Activated B cell treated with CpG ODN at 0.5 μM for 24 hours (primary cell): ENCODE measurements at regions of chr1 and their contacts with region 1.

Region 1: DNA sequence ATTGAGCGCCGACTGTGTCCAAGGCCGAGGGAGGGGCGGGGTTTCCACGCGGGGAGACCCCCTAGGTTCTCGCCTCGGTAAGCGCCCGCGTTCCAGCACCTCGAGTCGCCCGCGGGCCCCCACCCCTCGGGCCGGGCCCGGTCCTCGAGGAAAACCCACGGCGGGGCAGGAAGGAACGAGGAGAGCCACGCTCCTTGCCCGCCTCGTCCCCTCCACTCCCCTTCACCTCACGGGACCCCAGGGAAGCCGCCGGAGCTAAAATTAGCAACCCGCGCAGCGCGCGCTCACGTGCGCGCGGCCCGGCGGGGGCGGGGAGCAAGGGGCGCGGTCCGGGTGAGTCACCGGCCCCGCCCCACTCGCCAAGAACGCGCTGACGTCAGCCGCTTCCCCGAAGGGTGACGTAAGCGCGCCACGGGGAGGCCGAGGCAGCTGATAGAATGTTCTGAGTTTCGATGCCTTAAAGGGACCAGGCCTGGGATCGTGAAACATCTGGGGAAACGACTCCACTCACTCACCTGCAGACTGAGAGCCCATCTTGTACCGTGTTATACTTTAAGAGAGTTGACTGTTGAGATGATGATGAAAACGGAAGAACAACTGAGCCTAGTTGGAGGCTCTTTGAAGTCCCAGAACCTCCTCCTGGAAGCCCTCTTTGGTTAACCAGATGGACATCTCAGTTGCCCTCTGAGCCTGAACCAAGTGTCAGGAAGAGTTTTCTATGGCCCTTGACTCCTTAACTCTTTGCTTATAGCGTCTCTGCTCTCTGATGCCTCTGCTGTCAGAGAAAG is 49.7 kb upstream of the ATF3 start:
- DNase-seq: peak; percentile 93
- ATAC-seq: peak; percentile 88
- H3K4me3 Mint-ChIP-seq: peak overlapping the region; percentile 88
- H3K27ac Mint-ChIP-seq: peak overlapping the region; percentile 93
- H3K4me1 Mint-ChIP-seq: peaks cover 13% of the 10 kb centered on the region
- H3K27me3 Mint-ChIP-seq: peaks cover 2% of the 10 kb centered on the region
- CTCF ChIP-seq: no peak

Region 2: GRCh38 chr1:211939876-211940468 is 618.9 kb before region 1 on chr1:
- CTCF ChIA-PET with region 1: no interaction called
- POLR2A ChIA-PET with region 1: no interaction called
- intact Hi-C with region 1: loop called (anchors 5 kb)
- DNase-seq: no peak
- ATAC-seq: peak; percentile 55
- H3K4me3 Mint-ChIP-seq: peak overlapping the region; percentile 11
- H3K27ac Mint-ChIP-seq: peak overlapping the region; percentile 56
- H3K4me1 Mint-ChIP-seq: peaks cover 43% of the 10 kb centered on the region
- H3K27me3 Mint-ChIP-seq: no peaks in the 10 kb centered on the region
- CTCF ChIP-seq: no peak

Region 3: GRCh38 chr1:212432706-212433576 is 125.9 kb before region 1 on chr1 and contains the start of gene NENF:
- CTCF ChIA-PET with region 1: no interaction called
- POLR2A ChIA-PET with region 1: no interaction called
- intact Hi-C with region 1: loop called (anchors 2 kb)
- DNase-seq: peak; percentile 80
- ATAC-seq: peak; percentile 99
- H3K4me3 Mint-ChIP-seq: peak within 1 kb of the TSS; percentile 78
- H3K27ac Mint-ChIP-seq: peak within 1 kb of the TSS; percentile 22
- H3K4me1 Mint-ChIP-seq: peaks cover 16% of the 10 kb centered on the region
- H3K27me3 Mint-ChIP-seq: no peaks in the 10 kb centered on the region
- CTCF ChIP-seq: no peak
- total RNA-seq, gene NENF: 24.1 and 26.4 TPM in 2 replicates

Region 4: GRCh38 chr1:212578041-212578440 is 19.2 kb after region 1 on chr1:
- CTCF ChIA-PET with region 1: no interaction called
- POLR2A ChIA-PET with region 1: no interaction called
- intact Hi-C with region 1: no loop called
- DNase-seq: no peak
- ATAC-seq: no peak
- H3K4me3 Mint-ChIP-seq: no peak overlapping the region
- H3K27ac Mint-ChIP-seq: no peak overlapping the region
- H3K4me1 Mint-ChIP-seq: no peaks in the 10 kb centered on the region
- H3K27me3 Mint-ChIP-seq: peaks cover 17% of the 10 kb centered on the region
- CTCF ChIP-seq: no peak

Region 5: GRCh38 chr1:212595787-212596714 is 37.2 kb after region 1 on chr1:
- CTCF ChIA-PET with region 1: no interaction called
- POLR2A ChIA-PET with region 1: interaction called, 3 read pairs
- intact Hi-C with region 1: loop called (anchors 2 kb)
- DNase-seq: no peak
- ATAC-seq: peak; percentile 90
- H3K4me3 Mint-ChIP-seq: peak overlapping the region; percentile 72
- H3K27ac Mint-ChIP-seq: peak overlapping the region; percentile 84
- H3K4me1 Mint-ChIP-seq: peaks cover 16% of the 10 kb centered on the region
- H3K27me3 Mint-ChIP-seq: peaks cover 20% of the 10 kb centered on the region
- CTCF ChIP-seq: no peak

Region 6: DNA sequence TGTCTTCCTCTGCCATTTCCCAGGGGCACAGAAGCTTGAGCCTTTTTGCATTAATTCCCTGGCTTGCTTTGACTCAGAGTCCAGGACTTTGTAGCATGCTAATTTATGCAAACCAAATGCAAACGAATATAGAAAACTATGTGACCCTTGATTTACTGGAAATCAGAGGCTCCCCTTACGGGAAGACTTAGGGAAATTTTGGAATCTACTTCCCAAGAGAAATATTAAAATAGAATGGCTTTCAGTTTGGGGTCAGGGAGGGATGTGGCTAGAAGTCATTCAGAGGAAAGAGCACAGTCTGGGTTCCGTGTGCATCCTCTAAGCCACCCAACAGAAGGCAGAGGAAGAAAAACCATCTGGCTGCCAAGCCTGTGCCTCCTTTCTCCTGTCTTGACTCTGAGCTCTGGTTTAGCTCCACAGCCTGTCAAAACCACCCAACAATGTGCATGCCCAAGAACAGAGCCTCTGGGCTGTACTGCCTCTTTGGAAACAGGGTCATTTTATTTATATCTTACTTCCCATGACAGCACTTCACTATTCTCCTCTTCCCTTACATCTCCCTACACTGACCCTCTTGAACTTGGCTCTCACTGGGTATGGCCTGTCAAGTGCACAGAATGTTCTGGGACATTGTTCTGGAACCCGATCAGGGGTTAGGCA is 79.7 kb after region 1 on chr1:
- CTCF ChIA-PET with region 1: no interaction called
- POLR2A ChIA-PET with region 1: no interaction called
- intact Hi-C with region 1: no loop called
- DNase-seq: no peak
- ATAC-seq: no peak
- H3K4me3 Mint-ChIP-seq: no peak overlapping the region
- H3K27ac Mint-ChIP-seq: no peak overlapping the region
- H3K4me1 Mint-ChIP-seq: peaks cover 27% of the 10 kb centered on the region
- H3K27me3 Mint-ChIP-seq: peaks cover 9% of the 10 kb centered on the region
- CTCF ChIP-seq: no peak

Region 7: GRCh38 chr1:213015099-213016050 is 456.5 kb after region 1 on chr1 and contains the start of gene ANGEL2:
- CTCF ChIA-PET with region 1: no interaction called
- POLR2A ChIA-PET with region 1: no interaction called
- intact Hi-C with region 1: loop called (anchors 1 kb)
- DNase-seq: peak; percentile 87
- ATAC-seq: peak; percentile 95
- H3K4me3 Mint-ChIP-seq: peak within 1 kb of the TSS; percentile 100
- H3K27ac Mint-ChIP-seq: peak within 1 kb of the TSS; percentile 99
- H3K4me1 Mint-ChIP-seq: peaks cover 20% of the 10 kb centered on the region
- H3K27me3 Mint-ChIP-seq: no peaks in the 10 kb centered on the region
- CTCF ChIP-seq: no peak
- total RNA-seq, gene ANGEL2: 54.1 and 63.3 TPM in 2 replicates